Esophagus squamous epithelium (tissue), 5 donors: ENCODE measurements at regions of chr9 and their contacts with region 1.

Region 1: DNA sequence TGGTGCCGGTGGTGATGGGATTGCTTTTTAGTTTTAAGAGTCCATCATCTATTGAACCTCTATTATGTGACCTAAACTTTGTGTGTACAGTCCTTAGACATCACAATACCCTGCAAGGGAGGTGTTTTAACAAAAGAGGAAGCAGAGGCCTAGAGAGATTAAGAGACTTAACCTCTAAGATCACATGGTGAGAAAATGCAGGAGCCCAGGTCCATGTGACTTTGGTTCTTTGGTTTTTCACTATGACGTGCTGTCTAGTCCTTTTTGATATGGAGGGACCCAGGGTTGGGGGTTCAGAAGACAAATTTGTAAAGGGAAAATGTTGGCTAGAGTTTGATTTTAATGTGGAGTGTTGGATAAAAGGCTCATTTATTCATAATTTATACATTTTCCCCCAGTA is 34.1 kb upstream of the TRMT10B start:
- DNase-seq: no peak
- H3K4me3 ChIP-seq: no peak overlapping the region
- H3K27ac ChIP-seq: no peak overlapping the region
- H3K4me1 ChIP-seq: no peaks in the 10 kb centered on the region
- H3K27me3 ChIP-seq: peaks cover 0 to 8% (median 0%) of the 10 kb centered on the region in 4 donors
- CTCF ChIP-seq: no peak
- POLR2A ChIP-seq: no peak

Region 2: GRCh38 chr9:37650873-37651768 is 68.4 kb before region 1 on chr9 and contains the start of gene FRMPD1:
- intact Hi-C with region 1: loop called (anchors 10 kb)
- DNase-seq: no peak
- H3K4me3 ChIP-seq: peak within 1 kb of the TSS; percentile 40 to 73 (median 50)
- H3K27ac ChIP-seq: no peak within 1 kb of the TSS
- H3K4me1 ChIP-seq: peaks cover 5 to 19% (median 6%) of the 10 kb centered on the region in 3 donors
- H3K27me3 ChIP-seq: peaks cover 0 to 94% (median 5%) of the 10 kb centered on the region in 4 donors
- CTCF ChIP-seq: peak in 1 of 6 experiments; percentile 14
- POLR2A ChIP-seq: no peak
- total RNA-seq, gene FRMPD1: 0.04 to 0.18 TPM in 2 of 4 donors, not detected in the others